Activated B cell treated with CpG ODN at 0.5 μM for 24 hours (primary cell): ENCODE measurements at regions of chr7 and their contacts with region 1.

Region 1: GRCh38 chr7:130996841-130997231 is 262.8 kb upstream of the KLF14 start:
- DNase-seq: no peak
- ATAC-seq: peak; percentile 81
- H3K4me3 Mint-ChIP-seq: peak overlapping the region; percentile 4
- H3K27ac Mint-ChIP-seq: peak overlapping the region; percentile 79
- H3K4me1 Mint-ChIP-seq: peaks cover 77% of the 10 kb centered on the region
- H3K27me3 Mint-ChIP-seq: no peaks in the 10 kb centered on the region
- CTCF ChIP-seq: no peak

Region 2: GRCh38 chr7:131021460-131021859 is 24.6 kb after region 1 on chr7:
- CTCF ChIA-PET with region 1: no interaction called
- POLR2A ChIA-PET with region 1: interaction called, 12 read pairs
- intact Hi-C with region 1: no loop called
- DNase-seq: no peak
- ATAC-seq: peak; percentile 43
- H3K4me3 Mint-ChIP-seq: peak overlapping the region; percentile 57
- H3K27ac Mint-ChIP-seq: peak overlapping the region; percentile 83
- H3K4me1 Mint-ChIP-seq: peaks cover 77% of the 10 kb centered on the region
- H3K27me3 Mint-ChIP-seq: no peaks in the 10 kb centered on the region
- CTCF ChIP-seq: no peak

Region 3: DNA sequence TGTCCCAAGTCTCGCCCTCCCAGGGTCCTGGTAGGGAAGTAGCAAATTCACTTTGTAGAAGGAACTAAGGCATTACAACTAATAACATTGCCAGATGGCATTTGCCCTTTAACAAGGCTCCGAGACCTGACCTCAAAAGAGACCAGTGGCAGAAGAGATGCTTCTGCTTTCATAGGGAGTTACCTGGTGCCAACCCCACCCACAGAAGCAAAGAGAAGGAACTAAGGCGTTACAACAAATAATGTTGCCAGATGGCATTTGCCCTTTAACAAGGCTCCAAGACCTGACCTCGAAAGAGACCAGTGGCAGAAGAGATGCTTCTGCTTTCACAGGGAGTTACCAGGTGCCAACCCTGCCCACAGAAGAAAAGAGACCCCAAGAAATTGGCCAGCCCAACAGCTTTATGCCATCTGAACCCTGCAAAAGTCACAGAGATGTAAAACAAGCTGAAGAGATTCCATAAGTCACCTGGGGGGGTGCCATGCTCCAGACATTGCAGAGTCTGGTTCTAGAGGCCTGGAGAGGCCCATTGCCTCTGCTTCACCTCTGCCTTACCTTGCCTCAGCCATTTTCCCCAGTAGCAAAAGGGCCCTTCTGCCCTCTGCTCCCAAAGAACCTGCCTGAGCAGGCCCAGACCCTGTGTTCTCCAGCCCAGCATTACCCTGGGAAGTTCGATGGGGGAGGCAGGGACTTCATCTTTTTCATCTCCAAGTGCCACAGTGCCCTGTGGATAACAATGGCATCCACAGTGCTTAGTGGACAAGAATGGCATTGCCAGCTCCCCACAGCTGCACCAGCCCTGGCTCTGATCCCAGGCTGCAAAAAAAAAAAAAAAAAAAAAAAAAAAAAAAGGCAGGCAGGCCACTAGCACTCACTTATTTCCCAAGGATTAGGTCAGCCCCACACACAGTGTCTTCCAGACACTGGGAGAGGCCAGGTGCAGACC is 1759.0 kb after region 1 on chr7:
- CTCF ChIA-PET with region 1: no interaction called
- POLR2A ChIA-PET with region 1: no interaction called
- intact Hi-C with region 1: no loop called
- DNase-seq: no peak
- ATAC-seq: no peak
- H3K4me3 Mint-ChIP-seq: no peak overlapping the region
- H3K27ac Mint-ChIP-seq: no peak overlapping the region
- H3K4me1 Mint-ChIP-seq: no peaks in the 10 kb centered on the region
- H3K27me3 Mint-ChIP-seq: no peaks in the 10 kb centered on the region
- CTCF ChIP-seq: no peak